Heart right ventricle (tissue), 16 donors: ENCODE measurements at regions of chr5 and their contacts with region 1.

Region 1: GRCh38 chr5:91383027-91383955 is at the start of gene ARRDC3:
- DNase-seq: peak; percentile 95 to 97
- ATAC-seq: peak; percentile 68 to 91 (median 76)
- H3K4me3 ChIP-seq: peak within 1 kb of the TSS; percentile 67 to 84 (median 78)
- H3K27ac ChIP-seq: peak within 1 kb of the TSS; percentile 92 to 99 (median 98)
- H3K4me1 ChIP-seq: peaks cover 0 to 30% (median 21%) of the 10 kb centered on the region in 9 donors
- H3K27me3 ChIP-seq: no peaks in the 10 kb centered on the region
- CTCF ChIP-seq: peak in 2 of 9 donors; percentile 4 to 12
- total RNA-seq, gene ARRDC3: 9.4 to 61.5 (median 21.0) TPM

Region 2: DNA sequence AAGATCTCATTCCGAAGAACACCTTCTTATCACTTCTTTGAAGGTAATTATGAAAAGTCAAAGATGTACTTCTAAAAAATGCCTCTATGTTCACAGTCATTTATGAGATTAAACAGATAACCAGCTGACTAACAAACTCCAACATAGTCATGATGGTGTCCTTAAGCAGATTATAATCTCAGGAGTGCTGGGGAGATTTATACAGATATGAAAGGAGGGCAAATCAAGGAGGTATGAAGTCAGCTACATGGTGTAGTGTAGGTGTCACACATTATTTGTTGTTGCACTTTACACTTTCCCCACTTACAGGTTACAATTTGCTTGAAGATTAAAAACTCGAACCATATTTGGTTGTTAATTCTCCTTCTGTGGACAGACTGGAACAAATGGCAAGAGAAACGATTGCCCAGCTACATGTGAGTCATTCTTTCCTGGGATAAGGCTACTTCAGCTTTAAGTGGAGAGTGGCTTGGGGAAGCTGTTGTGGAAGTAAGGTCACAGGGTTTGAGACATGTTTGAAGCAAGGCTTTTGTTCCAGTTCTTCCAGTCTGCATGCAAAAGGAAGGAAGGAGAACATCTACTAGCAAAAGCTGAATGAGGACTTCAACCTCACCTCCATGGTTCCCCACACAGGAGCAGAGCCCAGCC is 504.6 kb before region 1 on chr5:
- intact Hi-C with region 1: loop called in 1 of 10 experiments (anchors 10 kb)
- DNase-seq: peak in 1 of 2 donors; percentile 28
- ATAC-seq: peak in 7 of 8 donors; percentile 58 to 91 (median 85)
- H3K4me3 ChIP-seq: no peak overlapping the region
- H3K27ac ChIP-seq: peak overlapping the region in 8 of 10 donors; percentile 14 to 78 (median 62)
- H3K4me1 ChIP-seq: peaks cover 0 to 32% (median 20%) of the 10 kb centered on the region in 9 donors
- H3K27me3 ChIP-seq: no peaks in the 10 kb centered on the region
- CTCF ChIP-seq: no peak

Region 3: DNA sequence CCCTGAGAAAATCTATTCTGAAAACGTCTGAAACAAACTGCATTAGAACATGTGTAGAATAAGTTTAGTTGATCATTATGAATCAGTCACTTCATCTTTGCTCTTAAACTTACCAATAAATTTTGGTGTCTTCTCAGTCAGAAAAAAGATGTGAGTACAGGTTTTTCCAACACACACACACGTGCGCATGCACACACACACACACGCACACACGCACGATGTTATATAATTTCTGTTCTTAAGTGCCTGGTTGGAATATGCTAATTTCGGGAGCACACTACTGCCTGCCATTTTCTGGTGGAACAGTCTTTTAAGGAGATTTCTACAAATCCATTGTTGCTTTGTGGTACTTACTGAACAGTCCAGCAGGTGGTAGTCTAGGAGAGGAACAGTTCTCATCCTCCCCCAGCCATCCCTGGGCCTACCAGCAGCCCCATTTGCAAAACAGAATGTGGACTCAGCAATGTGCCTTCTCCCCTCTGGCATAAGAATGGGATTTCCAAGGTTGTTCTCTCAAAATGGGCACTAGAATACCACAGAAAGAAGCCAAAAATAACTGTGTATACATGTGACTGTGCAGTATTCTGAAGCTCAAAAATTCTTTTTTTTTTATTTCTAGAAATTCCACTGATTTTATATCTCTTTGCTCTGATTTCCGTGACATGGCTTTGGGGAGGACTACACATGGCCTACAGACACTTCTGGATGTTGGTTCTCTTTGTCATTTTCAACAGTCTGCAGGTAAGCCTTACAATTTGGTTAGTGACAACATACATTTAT is 281.5 kb before region 1 on chr5:
- intact Hi-C with region 1: loop called (anchors 1 to 5 kb)
- DNase-seq: peak; percentile 47 to 86
- ATAC-seq: peak; percentile 91 to 97 (median 96)
- H3K4me3 ChIP-seq: no peak overlapping the region
- H3K27ac ChIP-seq: peak overlapping the region in 3 of 10 donors; percentile 9 to 26 (median 11)
- H3K4me1 ChIP-seq: peaks cover 0 to 31% (median 4%) of the 10 kb centered on the region in 9 donors
- H3K27me3 ChIP-seq: no peaks in the 10 kb centered on the region
- CTCF ChIP-seq: peak; percentile 71 to 87 (median 84)

Region 4: GRCh38 chr5:91225848-91226686 is 157.2 kb before region 1 on chr5:
- intact Hi-C with region 1: loop called in 8 of 10 experiments (anchors 2 to 10 kb)
- DNase-seq: no peak
- ATAC-seq: peak in 3 of 8 donors; percentile 16 to 46 (median 26)
- H3K4me3 ChIP-seq: no peak overlapping the region
- H3K27ac ChIP-seq: no peak overlapping the region
- H3K4me1 ChIP-seq: peaks cover 0 to 7% (median 0%) of the 10 kb centered on the region in 9 donors
- H3K27me3 ChIP-seq: no peaks in the 10 kb centered on the region
- CTCF ChIP-seq: peak in 8 of 9 donors; percentile 9 to 54 (median 38)

Region 5: DNA sequence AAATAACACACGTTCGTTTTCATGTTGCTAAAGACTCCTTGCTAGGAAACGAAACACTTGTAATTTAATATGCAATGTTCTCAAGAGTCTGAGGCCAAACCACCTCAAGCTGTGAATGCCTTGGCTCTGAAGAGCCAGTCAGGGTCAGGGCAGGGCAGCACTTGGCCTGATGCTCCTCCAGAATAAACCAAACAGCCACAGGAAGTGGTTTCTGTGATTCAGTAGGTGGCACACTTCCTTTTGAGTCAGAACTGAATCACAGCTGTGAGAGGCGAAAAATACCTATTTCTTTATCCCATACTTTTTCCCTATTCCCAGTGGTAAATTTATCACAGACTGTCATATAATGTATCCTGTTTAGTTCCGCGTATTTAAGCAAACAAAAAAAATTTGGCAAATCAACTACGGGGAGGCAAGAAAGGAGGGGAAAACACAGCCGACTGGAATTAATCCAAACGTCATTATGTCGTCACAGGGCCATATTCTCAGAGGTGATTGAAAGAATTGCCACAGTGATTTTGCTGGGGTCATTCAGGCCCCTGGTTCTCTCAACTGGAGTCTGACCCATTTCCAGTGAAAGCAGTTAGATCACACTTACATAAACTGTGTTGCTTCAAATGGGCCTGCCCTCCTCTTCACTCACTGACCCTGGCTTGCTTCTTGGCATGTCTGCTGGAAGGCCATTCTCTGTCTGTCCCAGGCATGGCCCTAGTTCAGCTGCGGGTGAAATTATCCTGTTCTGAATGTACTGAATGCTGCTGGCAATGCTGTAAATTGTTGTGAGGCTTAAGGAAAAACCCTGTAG is 71.4 kb before region 1 on chr5:
- intact Hi-C with region 1: loop called in 5 of 10 experiments (anchors 2 to 10 kb)
- DNase-seq: peak; percentile 41 to 56
- ATAC-seq: peak; percentile 67 to 85 (median 77)
- H3K4me3 ChIP-seq: peak overlapping the region in 1 of 10 donors; percentile 46
- H3K27ac ChIP-seq: peak overlapping the region; percentile 34 to 93 (median 74)
- H3K4me1 ChIP-seq: peaks cover 10 to 63% (median 27%) of the 10 kb centered on the region in 9 donors
- H3K27me3 ChIP-seq: no peaks in the 10 kb centered on the region
- CTCF ChIP-seq: peak in 5 of 9 donors; percentile 15 to 38 (median 20)

Region 6: DNA sequence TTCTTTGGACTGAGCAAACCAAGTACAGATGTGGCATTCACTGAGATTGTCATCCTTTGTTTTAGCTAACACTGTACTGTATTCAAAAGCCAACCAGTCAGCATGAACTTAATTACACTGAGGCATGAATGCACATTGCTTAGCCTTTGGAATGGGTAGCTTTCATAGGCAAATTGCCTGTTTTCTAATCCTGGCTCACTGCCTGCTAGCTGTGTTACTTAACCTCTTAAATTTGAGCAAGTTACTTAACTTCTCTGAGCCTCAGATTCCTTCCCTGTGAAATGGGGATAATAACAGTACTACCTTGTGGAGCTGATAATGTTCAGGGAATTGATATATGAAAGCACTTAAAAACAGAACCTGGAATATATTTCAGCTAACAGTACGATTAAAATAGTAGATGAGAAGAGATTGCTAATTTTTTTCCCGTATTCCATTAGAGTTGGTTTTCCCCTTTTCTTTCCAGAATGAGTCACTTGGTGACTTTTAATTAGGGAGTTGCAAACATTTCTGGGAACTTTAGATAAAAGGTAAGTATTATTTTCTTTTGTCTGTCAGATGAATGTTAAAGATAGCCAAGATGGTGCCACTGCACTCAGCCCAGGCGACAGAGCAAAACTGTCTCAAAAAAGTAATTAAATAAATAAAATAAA is 44.1 kb before region 1 on chr5:
- intact Hi-C with region 1: no loop called
- DNase-seq: no peak
- ATAC-seq: no peak
- H3K4me3 ChIP-seq: no peak overlapping the region
- H3K27ac ChIP-seq: no peak overlapping the region
- H3K4me1 ChIP-seq: peaks cover 0 to 4% (median 0%) of the 10 kb centered on the region in 9 donors
- H3K27me3 ChIP-seq: no peaks in the 10 kb centered on the region
- CTCF ChIP-seq: no peak

Region 7: GRCh38 chr5:91651703-91652102 is 268.4 kb after region 1 on chr5:
- intact Hi-C with region 1: no loop called
- DNase-seq: peak in 1 of 2 donors; percentile 8
- ATAC-seq: peak in 2 of 8 donors; percentile 25 to 38
- H3K4me3 ChIP-seq: no peak overlapping the region
- H3K27ac ChIP-seq: no peak overlapping the region
- H3K4me1 ChIP-seq: no peaks in the 10 kb centered on the region
- H3K27me3 ChIP-seq: no peaks in the 10 kb centered on the region
- CTCF ChIP-seq: no peak